ENCODE measurements at regions of chr16 and their contacts with region 1.

Region 1: GRCh38 chr16:1863681-1864460 is 8.1 kb downstream of the MEIOB start:
- DNase-seq: no peak
- ATAC-seq: no peak
- H3K4me3 ChIP-seq: no peak overlapping the region
- H3K27ac ChIP-seq: no peak overlapping the region
- H3K4me1 ChIP-seq: no peaks in the 10 kb centered on the region
- H3K27me3 ChIP-seq: peaks cover 0 to 74% (median 14%) of the 10 kb centered on the region in 9 donors
- CTCF ChIP-seq: peak; percentile 49 to 72 (median 64)
- POLR2A ChIP-seq: no peak

Region 2: GRCh38 chr16:1481906-1482835 is 381.7 kb before region 1 on chr16:
- intact Hi-C with region 1: no loop called
- DNase-seq: no peak
- ATAC-seq: no peak
- H3K4me3 ChIP-seq: no peak overlapping the region
- H3K27ac ChIP-seq: no peak overlapping the region
- H3K4me1 ChIP-seq: peaks cover 0 to 6% (median 0%) of the 10 kb centered on the region in 12 donors
- H3K27me3 ChIP-seq: no peaks in the 10 kb centered on the region
- CTCF ChIP-seq: no peak
- POLR2A ChIP-seq: no peak

Region 3: GRCh38 chr16:1850981-1851380 is 12.9 kb before region 1 on chr16:
- intact Hi-C with region 1: no loop called
- DNase-seq: no peak
- ATAC-seq: no peak
- H3K4me3 ChIP-seq: no peak overlapping the region
- H3K27ac ChIP-seq: no peak overlapping the region
- H3K4me1 ChIP-seq: no peaks in the 10 kb centered on the region
- H3K27me3 ChIP-seq: peaks cover 0 to 15% (median 0%) of the 10 kb centered on the region in 9 donors
- CTCF ChIP-seq: no peak
- POLR2A ChIP-seq: no peak

Region 4: GRCh38 chr16:1899641-1900451 is 36.0 kb after region 1 on chr16:
- intact Hi-C with region 1: loop called in 1 of 10 experiments (anchors 5 kb)
- DNase-seq: peak in 1 of 5 donors; percentile 9
- ATAC-seq: no peak
- H3K4me3 ChIP-seq: no peak overlapping the region
- H3K27ac ChIP-seq: no peak overlapping the region
- H3K4me1 ChIP-seq: no peaks in the 10 kb centered on the region
- H3K27me3 ChIP-seq: peaks cover 0 to 19% (median 9%) of the 10 kb centered on the region in 9 donors
- CTCF ChIP-seq: no peak
- POLR2A ChIP-seq: no peak

Region 5: DNA sequence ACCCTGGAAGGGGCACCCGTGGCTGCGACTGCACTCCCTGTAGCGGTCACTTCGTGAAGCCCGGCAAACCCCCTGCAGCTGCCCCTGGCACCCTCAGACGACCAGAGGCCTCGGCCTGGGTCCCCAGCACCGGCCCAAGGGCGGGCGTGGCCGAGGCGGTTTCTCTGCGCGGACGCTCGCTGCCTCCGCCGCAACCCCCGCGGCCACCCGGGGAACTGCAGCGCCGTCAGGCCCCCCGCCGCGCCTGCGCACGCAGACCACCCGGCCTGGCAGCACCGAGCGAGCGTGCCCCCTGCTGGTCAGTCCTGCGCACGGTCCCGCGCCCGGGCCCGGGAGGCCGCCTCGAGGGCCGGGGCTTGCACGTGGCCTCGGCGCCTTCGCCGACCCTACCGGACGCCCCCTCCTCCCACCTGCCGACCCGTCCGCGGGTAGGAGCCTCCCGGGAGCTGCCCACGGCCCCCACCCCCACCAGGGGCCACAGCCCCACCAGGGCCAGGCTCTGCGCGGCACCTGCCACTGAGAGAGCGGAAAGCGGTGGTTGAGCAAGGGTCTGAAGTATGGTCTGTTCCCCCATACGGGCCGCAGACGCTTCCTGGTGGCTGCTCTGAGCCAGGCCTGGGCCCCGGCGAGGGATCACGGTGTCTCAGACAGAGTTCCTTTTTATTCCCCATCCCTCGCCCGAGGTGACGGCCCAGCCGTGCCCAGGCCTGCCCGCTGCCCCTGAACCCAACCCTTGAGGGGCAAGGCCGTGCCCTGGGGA is 65.9 kb after region 1 on chr16:
- intact Hi-C with region 1: loop called in 9 of 10 experiments (anchors 1 to 5 kb)
- DNase-seq: peak; percentile 90 to 97 (median 91)
- ATAC-seq: peak; percentile 75 to 95 (median 91)
- H3K4me3 ChIP-seq: peak overlapping the region; percentile 37 to 74 (median 64)
- H3K27ac ChIP-seq: peak overlapping the region; percentile 36 to 85 (median 76)
- H3K4me1 ChIP-seq: peaks cover 0 to 12% (median 7%) of the 10 kb centered on the region in 12 donors
- H3K27me3 ChIP-seq: peaks cover 0 to 5% (median 0%) of the 10 kb centered on the region in 9 donors
- CTCF ChIP-seq: peak; percentile 83 to 100 (median 98)
- POLR2A ChIP-seq: peak in 1 of 2 donors; percentile 50

Region 6: DNA sequence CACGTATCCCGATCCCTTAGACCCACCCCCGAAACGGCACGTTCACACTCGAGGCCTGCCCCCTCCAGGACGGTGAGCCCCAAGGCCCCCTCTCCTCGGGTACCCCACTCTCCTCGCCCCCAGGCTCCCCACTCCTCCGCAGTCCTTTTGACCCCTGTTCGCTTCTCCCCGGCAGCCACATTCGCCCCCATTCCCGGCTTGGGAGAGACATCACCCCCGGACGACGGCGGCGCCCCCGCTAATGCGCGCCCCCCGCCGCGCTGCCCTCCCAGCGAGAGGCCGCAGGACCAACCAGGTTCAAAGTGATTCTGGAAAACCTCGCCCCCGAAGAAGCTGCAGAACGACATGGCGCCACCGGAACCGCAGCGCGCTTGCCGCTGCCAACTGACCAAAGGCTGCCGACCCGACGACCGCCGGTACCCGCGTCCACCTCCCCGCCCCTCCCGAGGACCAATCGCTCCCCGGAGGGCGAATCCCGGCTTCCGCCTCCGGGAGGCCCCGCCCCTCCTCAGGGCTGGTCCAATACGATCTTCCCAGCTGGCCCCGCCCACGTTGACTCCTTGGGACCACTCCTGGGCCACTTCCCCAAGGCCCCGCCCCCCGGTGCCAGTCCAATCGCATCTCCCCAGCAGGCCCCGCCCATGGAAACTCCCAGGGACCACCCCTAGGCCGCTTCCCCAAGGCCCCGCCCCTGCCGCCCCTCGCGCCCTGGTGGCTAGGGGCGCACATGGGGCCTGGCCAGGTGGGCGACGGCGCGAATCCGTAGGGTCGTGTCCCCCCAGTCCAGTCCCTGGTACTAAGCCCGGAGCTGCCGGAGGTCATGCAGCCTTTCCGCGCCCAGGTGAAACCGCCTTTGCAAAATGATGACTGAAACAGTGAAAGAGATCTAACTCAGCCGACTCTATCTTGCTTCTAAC is 79.2 kb after region 1 on chr16 and contains the start of gene MSRB1:
- intact Hi-C with region 1: loop called in 1 of 10 experiments (anchors 5 kb)
- DNase-seq: peak; percentile 100
- ATAC-seq: peak; percentile 91 to 96 (median 93)
- H3K4me3 ChIP-seq: peak within 1 kb of the TSS; percentile 50 to 88 (median 78)
- H3K27ac ChIP-seq: peak within 1 kb of the TSS in 11 of 12 donors; percentile 77 to 89 (median 81)
- H3K4me1 ChIP-seq: peaks cover 0 to 30% (median 16%) of the 10 kb centered on the region in 12 donors
- H3K27me3 ChIP-seq: no peaks in the 10 kb centered on the region
- CTCF ChIP-seq: no peak
- POLR2A ChIP-seq: peak; percentile 90 to 98
- total RNA-seq, gene MSRB1: 12.4 to 49.2 (median 31.1) TPM

Region 7: GRCh38 chr16:1991948-1992703 is 128.3 kb after region 1 on chr16:
- intact Hi-C with region 1: loop called in 1 of 10 experiments (anchors 10 kb)
- DNase-seq: peak; percentile 92 to 98 (median 97)
- ATAC-seq: peak; percentile 70 to 94 (median 91)
- H3K4me3 ChIP-seq: peak overlapping the region in 11 of 12 donors; percentile 6 to 60 (median 47)
- H3K27ac ChIP-seq: peak overlapping the region in 4 of 12 donors; percentile 14 to 76 (median 38)
- H3K4me1 ChIP-seq: peaks cover 5 to 36% (median 18%) of the 10 kb centered on the region in 12 donors
- H3K27me3 ChIP-seq: peaks cover 11 to 39% (median 30%) of the 10 kb centered on the region in 9 donors
- CTCF ChIP-seq: no peak
- POLR2A ChIP-seq: no peak